ENCODE measurements at regions of chr13 and their contacts with region 1.

Region 1: DNA sequence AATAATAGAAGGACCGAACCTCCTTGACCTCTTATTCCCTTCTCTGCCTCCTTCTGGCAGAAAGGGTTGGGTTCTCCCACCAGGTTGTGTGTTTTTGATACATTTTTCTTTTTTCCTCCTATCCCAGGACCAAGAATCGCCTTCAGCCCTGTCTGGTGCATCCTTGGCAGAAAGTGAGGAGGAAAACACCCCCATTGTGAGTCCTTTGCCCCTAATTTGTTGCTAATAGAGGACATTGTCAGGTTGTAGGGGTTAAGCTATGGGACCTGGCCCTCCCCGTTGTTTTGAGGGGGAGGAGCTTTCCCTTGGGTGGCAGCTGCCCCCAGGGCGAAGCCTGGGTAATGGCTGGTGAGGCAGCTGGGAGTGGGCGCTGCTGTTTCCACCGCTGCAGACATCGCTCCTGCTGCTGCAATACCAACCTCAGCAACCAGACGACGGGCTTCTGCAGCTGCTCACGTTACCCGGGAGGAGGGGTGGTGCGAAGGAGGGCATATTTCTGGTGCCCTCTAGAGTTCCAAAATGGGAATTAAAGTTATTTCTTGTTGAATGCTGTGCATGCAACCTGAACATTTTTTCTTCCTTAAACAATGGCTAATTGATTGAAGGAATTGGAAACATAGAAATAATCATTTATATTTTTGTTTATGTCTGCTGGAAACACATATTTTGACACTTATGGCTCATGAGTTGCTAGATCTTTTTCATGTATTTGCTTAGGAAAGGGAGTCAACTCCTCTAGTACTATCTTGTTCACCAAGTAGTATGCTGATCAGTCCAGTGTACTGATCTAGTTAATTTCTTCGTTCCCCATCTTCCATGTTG is 1.5 kb downstream of the ZMYM2 start:
- DNase-seq: peak; percentile 83 to 92
- ATAC-seq: peak; percentile 68 to 79 (median 72)
- H3K4me3 ChIP-seq: peak overlapping the region; percentile 92
- H3K27ac ChIP-seq: peak overlapping the region; percentile 94
- H3K4me1 ChIP-seq: peaks cover 35% of the 10 kb centered on the region
- H3K27me3 ChIP-seq: no peaks in the 10 kb centered on the region
- CTCF ChIP-seq: peak; percentile 89

Region 2: GRCh38 chr13:19782049-19782726 is 177.9 kb before region 1 on chr13:
- intact Hi-C with region 1: loop called in 1 of 2 experiments (anchors 10 kb)
- DNase-seq: peak; percentile 65 to 79
- ATAC-seq: peak; percentile 70 to 81 (median 74)
- H3K4me3 ChIP-seq: peak overlapping the region; percentile 96
- H3K27ac ChIP-seq: peak overlapping the region; percentile 97
- H3K4me1 ChIP-seq: peaks cover 9% of the 10 kb centered on the region
- H3K27me3 ChIP-seq: no peaks in the 10 kb centered on the region
- CTCF ChIP-seq: no peak

Region 3: GRCh38 chr13:19863323-19864023 is 96.6 kb before region 1 on chr13 and contains the start of gene ZMYM5:
- intact Hi-C with region 1: loop called (anchors 5 kb)
- DNase-seq: peak; percentile 99 to 100
- ATAC-seq: peak; percentile 95 to 98 (median 97)
- H3K4me3 ChIP-seq: peak within 1 kb of the TSS; percentile 79
- H3K27ac ChIP-seq: peak within 1 kb of the TSS; percentile 94
- H3K4me1 ChIP-seq: peaks cover 16% of the 10 kb centered on the region
- H3K27me3 ChIP-seq: no peaks in the 10 kb centered on the region
- CTCF ChIP-seq: no peak
- total RNA-seq, gene ZMYM5: 5.5 to 8.0 (median 6.1) TPM

Region 4: DNA sequence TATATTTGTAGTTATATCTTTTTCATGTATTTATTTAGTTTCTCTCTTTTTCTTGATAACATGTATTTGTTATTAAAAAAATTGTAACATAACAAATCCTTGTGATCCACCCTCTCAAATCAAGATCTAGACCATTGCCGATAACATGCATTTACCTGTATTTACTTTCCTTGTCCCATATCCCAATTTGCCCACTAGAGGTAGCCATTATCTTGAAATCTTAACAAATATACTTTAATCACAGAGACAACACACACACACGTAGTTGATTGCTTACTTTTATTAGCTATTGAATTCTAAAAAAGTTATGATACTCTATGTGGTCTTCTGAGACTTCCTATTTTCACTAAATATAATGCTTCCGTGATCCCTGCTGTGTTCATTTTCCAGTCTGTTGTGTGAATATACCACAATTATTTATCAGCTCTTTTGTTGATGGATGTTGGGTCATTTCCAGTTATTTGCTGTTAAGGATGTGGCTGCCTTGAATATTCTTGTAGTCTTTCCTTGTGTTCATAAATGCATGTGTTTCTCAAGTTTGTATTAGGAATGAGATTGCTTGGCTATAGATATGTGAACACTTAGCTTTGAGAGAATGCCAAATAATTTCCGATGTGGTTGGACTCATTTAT is 32.8 kb before region 1 on chr13:
- intact Hi-C with region 1: loop called (anchors 5 kb)
- DNase-seq: no peak
- ATAC-seq: peak in 2 of 4 donors; percentile 50 to 76
- H3K4me3 ChIP-seq: no peak overlapping the region
- H3K27ac ChIP-seq: no peak overlapping the region
- H3K4me1 ChIP-seq: no peaks in the 10 kb centered on the region
- H3K27me3 ChIP-seq: no peaks in the 10 kb centered on the region
- CTCF ChIP-seq: peak; percentile 56

Measured in psoas muscle (tissue), 8 donors.